GM13976 (cell line): ENCODE measurements at regions of chr21 and their contacts with region 1.

Region 1: GRCh38 chr21:44024887-44025362 is 12.8 kb downstream of the TRAPPC10 start:
- DNase-seq: no peak
- CTCF ChIP-seq: no peak

Region 2: GRCh38 chr21:44078411-44078981 is 53.6 kb after region 1 on chr21:
- in situ Hi-C with region 1: loop called (anchors 5 kb)
- DNase-seq: no peak
- CTCF ChIP-seq: no peak

Region 3: GRCh38 chr21:44299458-44300261 is 274.7 kb after region 1 on chr21 and contains the start of gene PFKL:
- in situ Hi-C with region 1: loop called (anchors 25 kb)
- DNase-seq: peak; percentile 94
- CTCF ChIP-seq: no peak